ENCODE measurements at regions of chr5 and their contacts with region 1.

Region 1: DNA sequence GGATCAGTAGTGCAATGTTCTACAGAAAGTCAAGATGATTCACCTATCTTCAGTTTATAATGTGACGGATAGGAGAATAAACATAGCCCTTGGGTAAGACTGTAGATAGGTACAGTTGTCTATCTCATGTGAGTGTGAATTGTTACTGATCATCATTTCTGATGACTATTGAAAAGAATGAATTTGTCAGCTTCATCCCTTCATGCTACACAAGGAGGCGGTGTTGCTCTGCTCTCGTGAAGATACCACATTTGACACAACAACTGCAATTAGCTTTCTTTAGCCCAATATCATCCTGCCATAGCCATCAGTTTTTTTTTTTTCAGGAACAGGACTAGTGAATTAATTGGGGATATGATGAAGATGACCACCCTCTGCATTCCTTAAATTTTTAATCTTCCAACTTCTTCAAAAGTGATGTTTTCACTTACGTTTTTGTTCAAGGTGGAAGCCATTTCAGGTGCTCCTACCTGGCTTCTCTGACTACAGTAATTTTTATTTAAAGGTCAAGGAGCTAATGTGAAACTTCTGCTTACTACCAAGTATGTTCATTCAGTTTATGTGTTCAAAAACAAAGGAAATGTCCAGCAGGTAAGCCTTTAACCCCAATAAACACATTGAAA is 152.9 kb upstream of the MOCS2 start:
- DNase-seq: peak; percentile 60
- H3K4me3 ChIP-seq: no peak overlapping the region
- H3K27ac ChIP-seq: peak overlapping the region; percentile 48
- H3K4me1 ChIP-seq: peaks cover 44% of the 10 kb centered on the region
- H3K27me3 ChIP-seq: no peaks in the 10 kb centered on the region
- CTCF ChIP-seq: peak; percentile 63 to 68

Region 2: GRCh38 chr5:52544738-52545137 is 717.7 kb before region 1 on chr5:
- CTCF ChIA-PET with region 1: no interaction called
- dilution Hi-C with region 1: no loop called
- in situ Hi-C with region 1: no loop called
- intact Hi-C with region 1: no loop called
- DNase-seq: no peak
- H3K4me3 ChIP-seq: no peak overlapping the region
- H3K27ac ChIP-seq: no peak overlapping the region
- H3K4me1 ChIP-seq: no peaks in the 10 kb centered on the region
- H3K27me3 ChIP-seq: peaks cover 7% of the 10 kb centered on the region
- CTCF ChIP-seq: no peak

Region 3: GRCh38 chr5:53991942-53992341 is 729.5 kb after region 1 on chr5:
- CTCF ChIA-PET with region 1: no interaction called
- dilution Hi-C with region 1: no loop called
- in situ Hi-C with region 1: no loop called
- intact Hi-C with region 1: loop called (anchors 5 kb)
- DNase-seq: no peak
- H3K4me3 ChIP-seq: no peak overlapping the region
- H3K27ac ChIP-seq: no peak overlapping the region
- H3K4me1 ChIP-seq: peaks cover 12% of the 10 kb centered on the region
- H3K27me3 ChIP-seq: no peaks in the 10 kb centered on the region
- CTCF ChIP-seq: peak; percentile 37 to 50

Measured in mammary epithelial cell (primary cell).